ENCODE measurements at regions of chr3 and their contacts with region 1.

Region 1: DNA sequence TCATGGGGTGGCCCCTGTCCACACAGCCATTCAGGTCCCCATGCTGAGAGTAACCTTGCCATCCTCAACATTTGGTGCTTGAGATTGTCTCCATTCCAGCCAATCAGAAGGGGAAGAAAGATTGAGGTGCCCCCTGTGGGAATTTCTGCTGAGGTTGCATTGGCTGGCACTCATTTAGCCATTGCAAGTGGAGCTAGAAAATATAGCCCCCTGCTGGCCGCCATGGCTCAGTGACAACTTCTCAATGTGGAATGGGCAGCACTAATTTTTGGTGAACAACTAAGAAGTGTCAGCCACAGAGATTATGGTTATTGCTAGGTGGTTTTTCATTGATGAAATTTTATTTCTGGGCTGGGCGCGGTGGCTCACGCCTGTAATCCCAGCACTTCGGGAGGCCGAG is 22.0 kb downstream of the COL6A6 start:
- DNase-seq: peak; percentile 18 to 40 (median 24)
- H3K4me3 ChIP-seq: no peak overlapping the region
- H3K4me3 Mint-ChIP-seq: no peak overlapping the region
- H3K27ac ChIP-seq: no peak overlapping the region
- H3K27ac Mint-ChIP-seq: no peak overlapping the region
- H3K4me1 ChIP-seq: no peaks in the 10 kb centered on the region
- H3K4me1 Mint-ChIP-seq: peaks cover 0 to 2% (median 0%) of the 10 kb centered on the region in 4 donors
- H3K27me3 ChIP-seq: no peaks in the 10 kb centered on the region
- H3K27me3 Mint-ChIP-seq: peaks cover 0 to 10% of the 10 kb centered on the region in 2 donors

Region 2: GRCh38 chr3:130276203-130276803 is 262.7 kb before region 1 on chr3:
- CTCF ChIA-PET with region 1: no interaction called
- POLR2A ChIA-PET with region 1: no interaction called
- intact Hi-C with region 1: loop called (anchors 5 kb)
- DNase-seq: peak in 3 of 5 donors; percentile 7 to 26 (median 8)
- H3K4me3 ChIP-seq: no peak overlapping the region
- H3K4me3 Mint-ChIP-seq: no peak overlapping the region
- H3K27ac ChIP-seq: no peak overlapping the region
- H3K27ac Mint-ChIP-seq: no peak overlapping the region
- H3K4me1 ChIP-seq: no peaks in the 10 kb centered on the region
- H3K4me1 Mint-ChIP-seq: peaks cover 0 to 5% (median under 1%) of the 10 kb centered on the region in 4 donors
- H3K27me3 ChIP-seq: peaks cover 3% of the 10 kb centered on the region
- H3K27me3 Mint-ChIP-seq: peaks cover 10 to 22% of the 10 kb centered on the region in 2 donors